Right lobe of liver (tissue), 6 donors: ENCODE measurements at regions of chr5 and their contacts with region 1.

Region 1: GRCh38 chr5:43389679-43390329 is 22.4 kb downstream of the CCL28 start:
- DNase-seq: peak in 1 of 3 donors; percentile 60
- ATAC-seq: peak; percentile 99 to 100 (median 100)
- H3K4me3 ChIP-seq: no peak overlapping the region
- H3K27ac ChIP-seq: no peak overlapping the region
- H3K4me1 ChIP-seq: no peaks in the 10 kb centered on the region
- H3K27me3 ChIP-seq: no peaks in the 10 kb centered on the region
- CTCF ChIP-seq: peak; percentile 95 to 99 (median 96)
- POLR2A ChIP-seq: no peak

Region 2: GRCh38 chr5:43227655-43228054 is 162.1 kb before region 1 on chr5:
- intact Hi-C with region 1: loop called in 1 of 2 experiments (anchors 10 kb)
- DNase-seq: no peak
- ATAC-seq: peak; percentile 83 to 88 (median 84)
- H3K4me3 ChIP-seq: no peak overlapping the region
- H3K27ac ChIP-seq: no peak overlapping the region
- H3K4me1 ChIP-seq: peaks cover 0 to 5% (median 0%) of the 10 kb centered on the region in 4 donors
- H3K27me3 ChIP-seq: no peaks in the 10 kb centered on the region
- CTCF ChIP-seq: peak; percentile 50 to 71 (median 62)
- POLR2A ChIP-seq: no peak

Region 3: GRCh38 chr5:43484106-43484849 is 94.5 kb after region 1 on chr5:
- intact Hi-C with region 1: loop called in 1 of 2 experiments (anchors 10 kb)
- DNase-seq: peak; percentile 82 to 85 (median 83)
- ATAC-seq: peak; percentile 84 to 86 (median 86)
- H3K4me3 ChIP-seq: peak overlapping the region; percentile 79 to 91 (median 85)
- H3K27ac ChIP-seq: peak overlapping the region; percentile 94 to 99 (median 94)
- H3K4me1 ChIP-seq: peaks cover 0 to 14% (median 5%) of the 10 kb centered on the region in 4 donors
- H3K27me3 ChIP-seq: no peaks in the 10 kb centered on the region
- CTCF ChIP-seq: peak; percentile 67 to 77 (median 68)
- POLR2A ChIP-seq: peak; percentile 50